ENCODE measurements at regions of chr5 and their contacts with region 1.

Region 1: GRCh38 chr5:55994574-55995333 is at the start of gene IL6ST:
- DNase-seq: peak; percentile 93 to 99 (median 95)
- ATAC-seq: peak; percentile 96
- H3K4me3 ChIP-seq: peak within 1 kb of the TSS; percentile 94
- H3K4me3 Mint-ChIP-seq: peak within 1 kb of the TSS; percentile 88 to 99 (median 96)
- H3K27ac ChIP-seq: peak within 1 kb of the TSS; percentile 99
- H3K27ac Mint-ChIP-seq: peak within 1 kb of the TSS; percentile 95 to 100 (median 98)
- H3K4me1 ChIP-seq: peaks cover 10 to 12% of the 10 kb centered on the region in 2 donors
- H3K4me1 Mint-ChIP-seq: peaks cover 28 to 59% (median 50%) of the 10 kb centered on the region in 7 donors
- H3K27me3 ChIP-seq: no peaks in the 10 kb centered on the region
- H3K27me3 Mint-ChIP-seq: no peaks in the 10 kb centered on the region
- total RNA-seq, gene IL6ST: 101 to 372 (median 346) TPM

Region 2: GRCh38 chr5:55821731-55822512 is 172.8 kb before region 1 on chr5:
- CTCF ChIA-PET with region 1: no interaction called
- POLR2A ChIA-PET with region 1: no interaction called
- intact Hi-C with region 1: no loop called
- DNase-seq: peak in 6 of 9 donors; percentile 6 to 34 (median 15)
- ATAC-seq: peak; percentile 41
- H3K4me3 ChIP-seq: no peak overlapping the region
- H3K4me3 Mint-ChIP-seq: peak overlapping the region; percentile 43 to 76 (median 59)
- H3K27ac ChIP-seq: no peak overlapping the region
- H3K27ac Mint-ChIP-seq: no peak overlapping the region
- H3K4me1 ChIP-seq: peaks cover 0 to 3% of the 10 kb centered on the region in 2 donors
- H3K4me1 Mint-ChIP-seq: peaks cover 0 to 15% (median 11%) of the 10 kb centered on the region in 7 donors
- H3K27me3 ChIP-seq: peaks cover 0 to 5% of the 10 kb centered on the region in 2 donors
- H3K27me3 Mint-ChIP-seq: peaks cover 53 to 67% (median 58%) of the 10 kb centered on the region in 5 donors

Region 3: GRCh38 chr5:55855509-55855908 is 139.2 kb before region 1 on chr5:
- CTCF ChIA-PET with region 1: no interaction called
- POLR2A ChIA-PET with region 1: no interaction called
- intact Hi-C with region 1: loop called in 1 of 2 experiments (anchors 5 kb)
- DNase-seq: peak in 7 of 9 donors; percentile 8 to 40 (median 29)
- ATAC-seq: no peak
- H3K4me3 ChIP-seq: no peak overlapping the region
- H3K4me3 Mint-ChIP-seq: peak overlapping the region; percentile 16 to 76 (median 53)
- H3K27ac ChIP-seq: no peak overlapping the region
- H3K27ac Mint-ChIP-seq: peak overlapping the region in 4 of 9 donors; percentile 17 to 74 (median 63)
- H3K4me1 ChIP-seq: peaks cover 14 to 24% of the 10 kb centered on the region in 2 donors
- H3K4me1 Mint-ChIP-seq: peaks cover 17 to 68% (median 29%) of the 10 kb centered on the region in 7 donors
- H3K27me3 ChIP-seq: no peaks in the 10 kb centered on the region
- H3K27me3 Mint-ChIP-seq: peaks cover 0 to 4% (median 0%) of the 10 kb centered on the region in 5 donors

Region 4: DNA sequence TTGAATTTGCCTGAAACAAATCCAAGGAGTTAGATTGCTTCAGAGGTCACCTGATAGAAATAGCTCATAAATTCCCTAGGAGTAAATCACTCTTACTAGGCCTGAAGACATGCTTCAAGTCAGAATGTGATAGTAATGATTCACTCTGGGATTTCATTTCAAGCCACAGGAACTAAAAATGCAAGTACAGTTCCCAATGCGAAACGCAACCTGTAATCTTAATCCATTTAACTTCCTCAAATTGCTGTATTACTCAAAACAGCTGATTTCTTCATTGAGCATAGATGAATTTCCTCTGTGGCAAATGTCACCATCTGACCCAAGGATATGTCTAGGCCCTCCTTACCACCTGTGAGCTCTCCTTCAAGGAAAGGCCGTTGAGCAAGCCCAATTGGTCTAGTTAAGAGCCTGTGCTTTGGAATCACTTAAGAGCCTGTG is 32.1 kb after region 1 on chr5:
- CTCF ChIA-PET with region 1: no interaction called
- POLR2A ChIA-PET with region 1: interaction called, 18 read pairs
- intact Hi-C with region 1: no loop called
- DNase-seq: no peak
- ATAC-seq: peak; percentile 78
- H3K4me3 ChIP-seq: no peak overlapping the region
- H3K4me3 Mint-ChIP-seq: no peak overlapping the region
- H3K27ac ChIP-seq: no peak overlapping the region
- H3K27ac Mint-ChIP-seq: peak overlapping the region in 1 of 9 donors; percentile 65
- H3K4me1 ChIP-seq: peaks cover 0 to 5% of the 10 kb centered on the region in 2 donors
- H3K4me1 Mint-ChIP-seq: peaks cover 3 to 42% (median 23%) of the 10 kb centered on the region in 7 donors
- H3K27me3 ChIP-seq: no peaks in the 10 kb centered on the region
- H3K27me3 Mint-ChIP-seq: peaks cover 0 to 29% (median 0%) of the 10 kb centered on the region in 5 donors

Region 5: DNA sequence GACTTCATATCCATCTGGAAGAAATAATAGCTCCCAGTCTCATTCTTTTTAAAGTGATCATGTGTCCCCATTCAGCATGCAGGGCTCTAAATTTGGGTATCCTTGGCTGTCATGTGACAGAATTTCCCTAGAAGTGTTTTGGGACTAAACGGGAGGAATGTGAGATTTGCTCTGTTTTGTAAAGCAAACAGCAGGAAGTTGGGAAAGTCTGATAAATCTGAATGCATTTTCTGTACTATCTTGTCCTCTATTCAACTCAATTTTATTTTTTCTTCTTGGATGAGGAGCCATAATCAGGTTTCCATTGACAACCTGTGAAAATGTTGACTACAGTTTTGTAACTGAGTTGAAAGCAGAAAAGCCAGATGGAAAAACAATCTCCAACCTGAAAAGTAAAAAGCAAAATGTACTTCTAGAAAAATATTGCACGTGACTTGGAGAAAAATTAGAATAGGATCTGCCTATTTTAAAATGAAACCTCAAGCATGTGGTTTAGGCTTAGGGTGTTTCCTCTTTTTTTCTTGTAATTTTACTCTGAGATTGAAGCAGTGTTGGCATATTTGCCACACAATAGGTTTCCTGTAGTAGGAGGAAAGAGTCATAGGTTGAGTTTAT is 76.2 kb after region 1 on chr5:
- CTCF ChIA-PET with region 1: interaction called, 4 read pairs
- POLR2A ChIA-PET with region 1: interaction called, 76 read pairs
- intact Hi-C with region 1: loop called in 1 of 2 experiments (anchors 1 kb)
- DNase-seq: peak in 7 of 9 donors; percentile 46 to 79 (median 69)
- ATAC-seq: peak; percentile 91
- H3K4me3 ChIP-seq: peak overlapping the region; percentile 31
- H3K4me3 Mint-ChIP-seq: peak overlapping the region; percentile 54 to 91 (median 78)
- H3K27ac ChIP-seq: peak overlapping the region; percentile 77
- H3K27ac Mint-ChIP-seq: peak overlapping the region; percentile 65 to 99 (median 91)
- H3K4me1 ChIP-seq: peaks cover 7 to 72% of the 10 kb centered on the region in 2 donors
- H3K4me1 Mint-ChIP-seq: peaks cover 41 to 95% (median 80%) of the 10 kb centered on the region in 7 donors
- H3K27me3 ChIP-seq: no peaks in the 10 kb centered on the region
- H3K27me3 Mint-ChIP-seq: peaks cover 0 to 3% (median 0%) of the 10 kb centered on the region in 5 donors

Region 6: GRCh38 chr5:56123531-56124243 is 128.9 kb after region 1 on chr5:
- CTCF ChIA-PET with region 1: interaction called, 3 read pairs
- POLR2A ChIA-PET with region 1: interaction called, 11 read pairs
- intact Hi-C with region 1: no loop called
- DNase-seq: no peak
- ATAC-seq: peak; percentile 29
- H3K4me3 ChIP-seq: no peak overlapping the region
- H3K4me3 Mint-ChIP-seq: peak overlapping the region in 3 of 10 donors; percentile 3 to 38 (median 29)
- H3K27ac ChIP-seq: no peak overlapping the region
- H3K27ac Mint-ChIP-seq: peak overlapping the region in 8 of 9 donors; percentile 32 to 89 (median 74)
- H3K4me1 ChIP-seq: peaks cover 0 to 42% of the 10 kb centered on the region in 2 donors
- H3K4me1 Mint-ChIP-seq: peaks cover 21 to 59% (median 45%) of the 10 kb centered on the region in 7 donors
- H3K27me3 ChIP-seq: no peaks in the 10 kb centered on the region
- H3K27me3 Mint-ChIP-seq: no peaks in the 10 kb centered on the region

Region 7: GRCh38 chr5:56161927-56162326 is 167.2 kb after region 1 on chr5:
- CTCF ChIA-PET with region 1: no interaction called
- POLR2A ChIA-PET with region 1: interaction called, 37 read pairs
- intact Hi-C with region 1: loop called in 1 of 2 experiments (anchors 2 kb)
- DNase-seq: no peak
- ATAC-seq: no peak
- H3K4me3 ChIP-seq: no peak overlapping the region
- H3K4me3 Mint-ChIP-seq: peak overlapping the region in 5 of 10 donors; percentile 38 to 96 (median 93)
- H3K27ac ChIP-seq: peak overlapping the region; percentile 61
- H3K27ac Mint-ChIP-seq: peak overlapping the region; percentile 24 to 98 (median 95)
- H3K4me1 ChIP-seq: peaks cover 0 to 45% of the 10 kb centered on the region in 2 donors
- H3K4me1 Mint-ChIP-seq: peaks cover 42 to 93% (median 79%) of the 10 kb centered on the region in 7 donors
- H3K27me3 ChIP-seq: peaks cover 0 to 2% of the 10 kb centered on the region in 2 donors
- H3K27me3 Mint-ChIP-seq: peaks cover 0 to 2% (median 0%) of the 10 kb centered on the region in 5 donors